ENCODE measurements at regions of chr21 and their contacts with region 1.

Region 1: GRCh38 chr21:17793246-17794123 is 25.7 kb downstream of the C21orf91 start:
- DNase-seq: no peak

Region 2: DNA sequence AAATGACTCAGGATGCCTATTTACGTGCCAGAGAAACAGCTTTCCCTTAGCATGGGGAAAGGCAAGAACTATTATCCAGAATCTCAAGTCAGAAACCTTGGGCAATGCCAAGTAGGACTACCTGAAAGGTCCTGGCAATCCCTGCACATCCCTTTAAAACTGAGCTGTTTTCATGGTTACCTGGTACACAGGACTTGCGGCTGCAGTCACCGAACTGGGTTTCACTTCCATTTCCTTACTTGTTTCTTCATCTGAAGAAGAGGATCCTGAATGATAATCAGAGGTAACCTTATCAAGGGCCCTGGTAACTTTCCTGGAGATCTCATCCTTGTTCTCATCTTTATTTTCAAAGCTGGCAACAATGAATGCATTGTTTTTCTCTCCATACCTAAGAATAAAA is 195.0 kb before region 1 on chr21:
- intact Hi-C with region 1: no loop called
- DNase-seq: no peak

Region 3: DNA sequence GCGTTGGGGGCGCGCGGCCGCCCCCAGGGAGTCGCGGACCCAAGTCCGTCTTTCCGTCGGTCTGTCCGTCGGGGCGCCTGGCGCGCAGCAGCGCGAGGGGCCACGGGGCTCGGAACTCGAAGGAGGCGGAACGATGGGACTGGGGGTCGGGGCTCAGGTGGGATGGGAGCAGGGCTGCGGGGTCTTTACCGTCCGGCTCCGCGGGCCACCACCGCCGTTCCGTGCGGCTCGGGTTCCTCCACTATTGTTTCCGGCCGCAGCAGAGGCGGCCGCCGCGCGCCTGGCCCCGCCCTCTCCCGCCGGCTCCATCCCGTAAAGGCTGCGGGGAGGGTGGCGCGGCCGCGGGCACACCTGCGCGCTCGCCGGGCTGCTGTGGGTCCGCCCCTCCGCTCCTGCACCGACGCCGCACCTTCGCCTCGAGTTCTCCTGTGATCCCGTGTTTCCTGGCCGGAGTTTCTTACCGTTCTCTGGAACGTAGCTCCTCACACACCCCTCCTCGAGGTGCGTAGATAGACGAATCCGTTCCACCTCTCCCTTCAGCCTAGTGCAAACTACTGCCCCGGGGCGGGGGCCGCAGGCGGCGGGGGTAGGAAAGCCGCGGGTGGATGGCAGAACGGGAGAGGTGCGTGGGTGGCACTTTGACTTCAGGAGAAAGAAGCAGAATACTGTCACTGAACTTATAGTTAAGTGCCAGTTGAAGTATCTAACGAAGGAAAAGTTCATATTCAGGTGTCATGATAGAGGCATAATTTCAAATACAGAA is 25.8 kb after region 1 on chr21 and contains the start of gene C21orf91:
- intact Hi-C with region 1: loop called (anchors 2 kb)
- DNase-seq: peak; percentile 71 to 98 (median 86)